ENCODE measurements at regions of chr13 and their contacts with region 1.

Region 1: GRCh38 chr13:21638319-21639282 is 32.3 kb upstream of the FGF9 start:
- DNase-seq: no peak
- H3K4me3 Mint-ChIP-seq: no peak overlapping the region
- H3K27ac Mint-ChIP-seq: no peak overlapping the region
- H3K4me1 Mint-ChIP-seq: no peaks in the 10 kb centered on the region
- H3K27me3 Mint-ChIP-seq: peaks cover 7% of the 10 kb centered on the region

Region 2: DNA sequence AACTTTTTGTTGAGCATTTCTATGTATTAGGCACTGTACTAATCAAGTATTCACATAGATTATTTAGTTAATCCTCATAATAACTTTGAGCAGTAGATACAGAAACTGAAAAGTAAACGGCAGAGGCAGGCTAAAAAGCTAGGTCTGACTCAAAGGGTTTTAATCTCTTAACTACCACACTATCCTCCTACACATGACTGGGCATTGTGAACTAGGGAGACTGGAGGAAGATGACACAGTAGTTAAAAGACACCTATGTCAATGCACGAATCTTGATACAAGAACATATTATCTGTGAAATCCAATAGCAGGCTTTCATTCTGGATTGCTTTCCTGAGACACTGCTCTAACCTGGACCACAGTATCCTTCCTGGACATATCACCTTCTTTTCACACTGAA is 70.9 kb before region 1 on chr13:
- intact Hi-C with region 1: no loop called
- DNase-seq: no peak
- H3K4me3 Mint-ChIP-seq: no peak overlapping the region
- H3K27ac Mint-ChIP-seq: no peak overlapping the region
- H3K4me1 Mint-ChIP-seq: peaks cover 17% of the 10 kb centered on the region
- H3K27me3 Mint-ChIP-seq: no peaks in the 10 kb centered on the region

Region 3: GRCh38 chr13:21677075-21677623 is 38.5 kb after region 1 on chr13:
- intact Hi-C with region 1: no loop called
- DNase-seq: no peak
- H3K4me3 Mint-ChIP-seq: no peak overlapping the region
- H3K27ac Mint-ChIP-seq: no peak overlapping the region
- H3K4me1 Mint-ChIP-seq: peaks cover 11% of the 10 kb centered on the region
- H3K27me3 Mint-ChIP-seq: peaks cover 56% of the 10 kb centered on the region

Region 4: DNA sequence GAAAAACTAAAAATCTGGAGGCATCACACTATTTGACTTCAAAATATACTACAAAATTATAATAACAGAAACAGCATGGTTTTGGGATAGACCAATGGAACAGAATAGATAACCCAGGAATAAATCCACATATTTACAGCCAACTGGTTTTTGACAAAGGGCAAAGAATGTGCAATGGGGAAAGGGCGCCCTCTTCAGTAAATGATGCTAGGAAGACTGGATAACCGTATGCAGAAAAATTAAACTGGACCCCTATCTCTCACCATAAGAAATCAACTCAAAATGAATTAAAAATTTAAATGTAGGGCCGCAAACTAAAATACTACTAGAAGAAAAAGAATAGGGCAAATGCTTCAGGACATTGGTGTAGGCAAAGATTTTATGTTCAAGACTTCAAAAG is 1101.7 kb after region 1 on chr13:
- intact Hi-C with region 1: loop called (anchors 10 kb)
- DNase-seq: no peak
- H3K4me3 Mint-ChIP-seq: no peak overlapping the region
- H3K27ac Mint-ChIP-seq: no peak overlapping the region
- H3K4me1 Mint-ChIP-seq: no peaks in the 10 kb centered on the region
- H3K27me3 Mint-ChIP-seq: no peaks in the 10 kb centered on the region

Measured in activated T-helper 1 cell treated with anti-CD3 and anti-CD28 coated beads, Interleukin-12 subunit alpha, Interleukin-12 subunit beta, Interleukin-2, Interleukin-4 antibody, amounts not matched to agents 30 ng/mL and 10 ng/mL and 1 ng/mL, durations not matched to agents 14 hours and 24 hours and 36 hours (primary cell).